ENCODE measurements at regions of chr2 and their contacts with region 1.

Region 1: GRCh38 chr2:119659601-119660342 is 19.2 kb upstream of the TMEM177 start:
- DNase-seq: peak; percentile 78
- H3K4me3 Mint-ChIP-seq: no peak overlapping the region
- H3K27ac Mint-ChIP-seq: no peak overlapping the region
- H3K4me1 Mint-ChIP-seq: peaks cover 14% of the 10 kb centered on the region
- H3K27me3 Mint-ChIP-seq: peaks cover 8% of the 10 kb centered on the region

Region 2: DNA sequence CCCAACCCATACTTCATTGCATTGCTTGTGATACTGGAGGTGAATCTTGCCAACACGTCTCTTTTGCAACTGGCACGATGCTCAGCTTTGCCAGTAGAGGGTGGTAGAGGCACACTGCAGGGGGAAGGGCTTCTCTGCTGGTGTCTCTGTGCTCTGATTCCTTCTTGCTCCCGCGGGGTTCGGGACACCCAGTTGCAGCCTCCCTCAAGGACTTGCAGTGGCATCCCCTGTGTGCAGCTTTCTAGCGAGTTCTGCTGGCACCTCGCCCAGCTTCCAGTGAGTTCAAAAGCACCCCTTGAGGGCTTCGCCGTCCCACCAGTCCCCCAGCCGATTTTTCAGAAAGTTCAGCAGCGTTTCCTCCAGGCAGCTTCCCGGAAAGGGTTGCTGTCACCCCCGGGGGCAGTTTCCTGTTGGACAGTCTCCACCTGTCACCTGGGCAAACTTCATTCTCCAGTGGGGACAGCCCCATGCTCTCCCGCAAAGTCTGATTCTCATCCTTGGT is 777.0 kb before region 1 on chr2:
- intact Hi-C with region 1: loop called (anchors 5 kb)
- DNase-seq: peak; percentile 87
- H3K4me3 Mint-ChIP-seq: peak overlapping the region; percentile 74
- H3K27ac Mint-ChIP-seq: no peak overlapping the region
- H3K4me1 Mint-ChIP-seq: peaks cover 4% of the 10 kb centered on the region
- H3K27me3 Mint-ChIP-seq: no peaks in the 10 kb centered on the region

Region 3: DNA sequence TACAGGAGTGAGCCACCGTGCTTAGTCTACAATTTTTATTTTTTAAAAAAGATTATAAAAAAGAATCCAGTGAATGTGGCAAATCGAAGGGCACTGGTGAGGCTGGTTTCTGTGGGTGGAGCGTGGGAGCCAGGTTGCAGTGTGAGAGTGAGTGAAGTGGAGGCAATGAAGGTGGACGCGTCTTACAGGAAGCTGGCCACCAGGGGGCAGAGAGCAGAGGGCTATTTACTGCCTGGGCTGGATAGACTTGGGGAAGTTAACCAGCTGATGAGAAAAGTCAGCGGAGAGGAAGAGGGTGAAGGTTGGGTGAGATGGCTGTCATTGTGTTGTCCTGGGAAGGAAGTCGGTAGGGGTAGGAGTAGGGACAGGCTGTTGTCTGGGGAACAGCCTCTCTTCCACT is 142.3 kb before region 1 on chr2:
- intact Hi-C with region 1: loop called (anchors 5 kb)
- DNase-seq: peak; percentile 79
- H3K4me3 Mint-ChIP-seq: no peak overlapping the region
- H3K27ac Mint-ChIP-seq: no peak overlapping the region
- H3K4me1 Mint-ChIP-seq: no peaks in the 10 kb centered on the region
- H3K27me3 Mint-ChIP-seq: peaks cover 2% of the 10 kb centered on the region

Region 4: GRCh38 chr2:119641562-119642258 is 18.1 kb before region 1 on chr2:
- intact Hi-C with region 1: loop called (anchors 1 kb)
- DNase-seq: peak; percentile 92
- H3K4me3 Mint-ChIP-seq: no peak overlapping the region
- H3K27ac Mint-ChIP-seq: no peak overlapping the region
- H3K4me1 Mint-ChIP-seq: peaks cover 2% of the 10 kb centered on the region
- H3K27me3 Mint-ChIP-seq: peaks cover 12% of the 10 kb centered on the region